ENCODE measurements at regions of chr3 and their contacts with region 1.

Region 1: GRCh38 chr3:14261229-14261628 is 82.6 kb downstream of the LSM3 start:
- DNase-seq: peak; percentile 87 to 91
- H3K4me3 ChIP-seq: no peak overlapping the region
- H3K4me3 Mint-ChIP-seq: no peak overlapping the region
- H3K27ac Mint-ChIP-seq: no peak overlapping the region
- H3K4me1 ChIP-seq: peaks cover 29% of the 10 kb centered on the region
- H3K4me1 Mint-ChIP-seq: peaks cover 27% of the 10 kb centered on the region
- H3K27me3 ChIP-seq: no peaks in the 10 kb centered on the region
- H3K27me3 Mint-ChIP-seq: no peaks in the 10 kb centered on the region
- CTCF ChIP-seq: peak; percentile 87 to 97

Region 2: DNA sequence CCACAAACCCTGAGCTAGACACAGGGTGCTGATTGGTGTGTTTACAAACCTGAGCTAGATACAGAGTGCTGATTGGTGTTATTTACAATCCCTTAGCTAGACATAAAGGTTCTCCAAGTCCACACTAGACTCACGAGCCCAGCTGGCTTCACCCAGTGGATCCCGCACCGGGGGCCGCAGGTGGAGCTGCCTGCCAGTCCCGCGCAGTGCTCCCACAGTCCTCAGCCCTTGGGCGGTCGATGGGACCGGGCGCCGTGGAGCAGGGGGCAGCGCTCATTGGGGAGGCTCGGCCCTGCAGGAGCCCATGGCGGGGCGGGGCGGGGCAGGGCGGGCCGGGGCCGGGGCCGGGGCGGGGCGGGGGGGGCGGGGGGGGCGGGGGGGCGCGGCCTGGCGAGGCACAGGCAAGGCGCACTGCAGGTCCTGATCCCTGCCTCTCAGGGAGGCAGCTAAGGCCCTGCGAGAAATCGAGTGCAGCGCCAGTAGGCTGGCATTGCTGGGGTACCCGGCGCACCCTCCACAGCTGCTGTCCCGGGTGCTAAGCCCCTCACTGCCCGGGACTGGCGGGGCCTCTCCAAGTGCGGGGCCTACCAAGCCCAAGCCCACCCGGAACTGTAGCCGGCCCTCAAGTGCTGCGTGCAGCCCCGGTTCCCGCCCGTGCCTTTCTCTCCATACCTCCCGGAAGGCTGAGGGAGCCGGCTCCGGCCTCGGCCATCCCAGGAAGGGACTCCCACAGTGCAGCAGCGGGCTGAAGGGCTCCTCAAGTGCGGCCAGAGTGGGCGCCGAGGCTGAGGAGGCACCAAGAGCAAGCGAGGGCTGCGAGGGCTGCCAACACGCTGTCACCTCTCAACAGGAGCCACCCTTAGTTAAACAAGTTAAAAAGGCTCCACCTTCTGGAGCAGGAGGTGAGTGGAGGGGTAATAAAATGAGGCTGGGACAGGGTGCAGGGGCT is 1492.4 kb before region 1 on chr3:
- CTCF ChIA-PET with region 1: no interaction called
- POLR2A ChIA-PET with region 1: no interaction called
- intact Hi-C with region 1: no loop called
- DNase-seq: no peak
- H3K4me3 ChIP-seq: no peak overlapping the region
- H3K4me3 Mint-ChIP-seq: no peak overlapping the region
- H3K27ac Mint-ChIP-seq: no peak overlapping the region
- H3K4me1 ChIP-seq: no peaks in the 10 kb centered on the region
- H3K4me1 Mint-ChIP-seq: no peaks in the 10 kb centered on the region
- H3K27me3 ChIP-seq: no peaks in the 10 kb centered on the region
- H3K27me3 Mint-ChIP-seq: no peaks in the 10 kb centered on the region
- CTCF ChIP-seq: no peak

Region 3: DNA sequence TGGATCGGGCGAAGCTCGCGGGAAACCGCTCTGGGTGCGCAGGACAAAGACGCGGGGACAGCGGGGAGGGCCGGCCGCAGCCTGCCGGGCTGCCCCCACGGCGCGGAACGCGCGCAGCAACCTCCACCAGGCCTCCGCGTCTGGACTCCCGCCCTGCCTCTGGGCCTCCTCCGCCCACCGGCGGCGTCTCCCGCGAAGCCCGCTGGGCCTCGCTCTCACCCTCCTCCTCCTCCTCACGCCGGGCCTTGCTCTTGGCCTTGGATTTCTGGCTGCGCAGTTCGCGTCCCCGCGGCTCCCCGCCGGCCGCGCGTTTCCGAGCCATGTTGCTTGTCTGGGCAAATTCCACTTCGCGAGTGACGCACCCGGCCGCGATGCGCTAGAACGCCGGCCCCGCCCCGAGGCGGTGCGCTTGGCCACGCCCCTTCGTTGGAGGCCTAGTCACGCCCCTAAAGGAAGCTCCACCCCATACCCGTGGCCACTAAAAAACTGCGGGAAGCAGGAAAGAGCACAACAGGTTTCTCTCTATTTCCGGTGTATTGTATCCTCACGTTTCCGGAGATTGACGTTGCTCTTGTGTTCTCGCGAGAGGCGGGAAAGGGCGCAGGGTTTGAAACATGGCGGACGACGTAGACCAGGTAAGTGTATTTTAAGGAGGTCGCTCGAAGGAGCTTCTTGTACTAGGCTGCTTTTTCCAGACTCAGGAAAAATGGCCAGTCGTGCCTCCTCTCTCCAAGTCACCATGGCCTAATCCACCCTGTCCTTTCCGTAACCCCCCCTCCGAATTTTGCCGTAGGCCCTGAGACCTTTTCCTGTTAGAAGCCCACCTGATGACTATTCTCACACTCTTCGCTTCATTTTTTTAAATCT is 82.7 kb before region 1 on chr3 and contains the starts of genes LSM3 and XPC:
- CTCF ChIA-PET with region 1: no interaction called
- POLR2A ChIA-PET with region 1: no interaction called
- intact Hi-C with region 1: no loop called
- DNase-seq: peak; percentile 97 to 98
- H3K4me3 ChIP-seq: peak within 1 kb of the TSS; percentile 95
- H3K4me3 Mint-ChIP-seq: peak within 1 kb of the TSS; percentile 82
- H3K27ac Mint-ChIP-seq: peak within 1 kb of the TSS; percentile 94
- H3K4me1 ChIP-seq: peaks cover 16% of the 10 kb centered on the region
- H3K4me1 Mint-ChIP-seq: peaks cover 24% of the 10 kb centered on the region
- H3K27me3 ChIP-seq: no peaks in the 10 kb centered on the region
- H3K27me3 Mint-ChIP-seq: no peaks in the 10 kb centered on the region
- CTCF ChIP-seq: no peak
- total RNA-seq, gene LSM3: 19.1 and 20.5 TPM in 2 replicates
- total RNA-seq, gene XPC: 31.0 and 33.1 TPM in 2 replicates

Region 4: GRCh38 chr3:14289590-14290461 is 28.6 kb after region 1 on chr3:
- CTCF ChIA-PET with region 1: no interaction called
- POLR2A ChIA-PET with region 1: no interaction called
- intact Hi-C with region 1: loop called (anchors 2 kb)
- DNase-seq: peak; percentile 50 to 52
- H3K4me3 ChIP-seq: no peak overlapping the region
- H3K4me3 Mint-ChIP-seq: peak overlapping the region; percentile 64
- H3K27ac Mint-ChIP-seq: peak overlapping the region; percentile 95
- H3K4me1 ChIP-seq: peaks cover 50% of the 10 kb centered on the region
- H3K4me1 Mint-ChIP-seq: peaks cover 32% of the 10 kb centered on the region
- H3K27me3 ChIP-seq: no peaks in the 10 kb centered on the region
- H3K27me3 Mint-ChIP-seq: no peaks in the 10 kb centered on the region
- CTCF ChIP-seq: no peak

Region 5: GRCh38 chr3:14369675-14370669 is 108.7 kb after region 1 on chr3:
- CTCF ChIA-PET with region 1: interaction called, 5 read pairs
- POLR2A ChIA-PET with region 1: no interaction called
- intact Hi-C with region 1: loop called (anchors 1 kb)
- DNase-seq: peak; percentile 75
- H3K4me3 ChIP-seq: no peak overlapping the region
- H3K4me3 Mint-ChIP-seq: no peak overlapping the region
- H3K27ac Mint-ChIP-seq: peak overlapping the region; percentile 26
- H3K4me1 ChIP-seq: peaks cover 44% of the 10 kb centered on the region
- H3K4me1 Mint-ChIP-seq: peaks cover 41% of the 10 kb centered on the region
- H3K27me3 ChIP-seq: no peaks in the 10 kb centered on the region
- H3K27me3 Mint-ChIP-seq: no peaks in the 10 kb centered on the region
- CTCF ChIP-seq: peak in 1 of 2 experiments; percentile 77

Region 6: GRCh38 chr3:14461748-14462324 is 200.6 kb after region 1 on chr3:
- CTCF ChIA-PET with region 1: interaction called, 3 read pairs
- POLR2A ChIA-PET with region 1: no interaction called
- intact Hi-C with region 1: loop called (anchors 1 kb)
- DNase-seq: peak; percentile 74 to 78
- H3K4me3 ChIP-seq: no peak overlapping the region
- H3K4me3 Mint-ChIP-seq: no peak overlapping the region
- H3K27ac Mint-ChIP-seq: peak overlapping the region; percentile 70
- H3K4me1 ChIP-seq: no peaks in the 10 kb centered on the region
- H3K4me1 Mint-ChIP-seq: no peaks in the 10 kb centered on the region
- H3K27me3 ChIP-seq: no peaks in the 10 kb centered on the region
- H3K27me3 Mint-ChIP-seq: no peaks in the 10 kb centered on the region
- CTCF ChIP-seq: peak; percentile 65 to 95

Region 7: DNA sequence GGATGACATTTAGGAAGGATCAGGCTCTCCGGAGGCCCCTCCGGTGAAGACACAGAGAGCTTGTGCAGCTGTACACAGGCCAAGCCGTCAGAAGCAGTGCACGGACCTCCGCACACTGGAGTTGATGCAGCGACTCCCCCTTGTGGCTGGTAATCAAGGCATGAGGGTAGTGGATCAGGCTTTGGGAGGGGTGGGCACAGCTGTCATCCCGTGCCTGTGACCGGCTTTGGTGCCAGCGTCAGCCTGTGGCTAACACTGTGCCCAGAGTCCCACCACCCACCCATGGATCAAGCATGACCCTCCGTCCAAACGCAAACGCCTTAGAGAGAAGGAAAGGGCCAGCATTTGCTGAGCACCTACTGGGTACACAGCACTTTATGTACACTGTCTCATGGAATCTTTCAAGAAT is 287.1 kb after region 1 on chr3:
- CTCF ChIA-PET with region 1: no interaction called
- POLR2A ChIA-PET with region 1: no interaction called
- intact Hi-C with region 1: loop called (anchors 5 kb)
- DNase-seq: peak; percentile 59 to 61
- H3K4me3 ChIP-seq: no peak overlapping the region
- H3K4me3 Mint-ChIP-seq: no peak overlapping the region
- H3K27ac Mint-ChIP-seq: no peak overlapping the region
- H3K4me1 ChIP-seq: peaks cover 9% of the 10 kb centered on the region
- H3K4me1 Mint-ChIP-seq: peaks cover 12% of the 10 kb centered on the region
- H3K27me3 ChIP-seq: no peaks in the 10 kb centered on the region
- H3K27me3 Mint-ChIP-seq: no peaks in the 10 kb centered on the region
- CTCF ChIP-seq: peak; percentile 61 to 66

Measured in Caco-2 (cell line).